ENCODE measurements at regions of chr16 and their contacts with region 1.

Region 1: DNA sequence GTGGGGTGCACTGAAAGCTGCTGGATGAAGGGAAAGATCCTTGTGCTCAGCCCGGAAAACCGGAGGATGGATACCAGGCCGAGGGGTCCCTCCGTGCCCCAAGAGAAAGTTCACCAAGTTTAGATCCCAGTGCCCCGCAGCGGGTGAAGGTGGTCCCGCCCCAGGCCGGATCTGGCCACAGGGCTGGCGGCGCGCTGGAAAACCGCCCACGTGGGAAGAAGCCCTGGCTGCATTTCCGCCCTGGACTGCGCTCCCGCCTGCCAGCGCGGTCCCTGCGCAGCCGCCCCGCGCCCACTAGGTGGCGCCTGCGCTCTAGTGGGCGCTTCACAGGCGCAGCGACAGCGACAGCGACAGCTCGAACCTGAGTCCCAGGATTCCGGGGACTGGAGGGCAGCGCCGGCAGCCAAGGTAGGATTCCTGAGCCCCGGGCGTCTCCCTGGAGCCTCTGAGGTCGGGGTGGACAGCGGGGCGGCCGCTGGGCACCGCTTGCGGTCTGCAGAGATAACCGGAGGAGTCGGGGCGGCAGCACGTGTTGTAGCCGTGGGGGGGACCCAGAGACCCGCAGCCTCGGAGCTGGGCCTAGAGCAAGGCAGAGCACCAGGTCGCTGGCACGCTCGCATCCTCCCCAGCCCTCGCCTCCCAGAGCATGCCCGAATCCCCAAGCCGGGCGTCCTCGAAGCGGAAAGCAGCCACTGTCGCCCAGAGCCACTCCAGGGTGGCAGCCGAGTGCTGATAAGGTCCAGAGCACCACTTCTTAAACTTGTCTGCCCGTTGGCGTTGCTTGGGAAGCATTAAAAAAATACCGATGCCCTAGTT is at the start of gene CHD9:
- DNase-seq: peak; percentile 88 to 90 (median 89)
- ATAC-seq: peak; percentile 84 to 95 (median 89)
- H3K4me3 ChIP-seq: peak within 1 kb of the TSS; percentile 67 to 81 (median 81)
- H3K27ac ChIP-seq: peak within 1 kb of the TSS; percentile 83 to 89 (median 83)
- H3K4me1 ChIP-seq: peaks cover 0 to 55% (median 16%) of the 10 kb centered on the region in 4 donors
- H3K27me3 ChIP-seq: no peaks in the 10 kb centered on the region
- CTCF ChIP-seq: peak; percentile 99 to 100 (median 100)
- POLR2A ChIP-seq: peak; percentile 71
- total RNA-seq, gene CHD9: 19.8 to 44.3 (median 30.2) TPM

Region 2: GRCh38 chr16:53129281-53130158 is 74.6 kb after region 1 on chr16:
- intact Hi-C with region 1: loop called in 1 of 2 experiments (anchors 5 kb)
- DNase-seq: no peak
- ATAC-seq: peak in 1 of 4 donors; percentile 8
- H3K4me3 ChIP-seq: peak overlapping the region; percentile 60 to 82 (median 61)
- H3K27ac ChIP-seq: peak overlapping the region; percentile 90 to 92 (median 91)
- H3K4me1 ChIP-seq: peaks cover 0 to 21% (median 9%) of the 10 kb centered on the region in 4 donors
- H3K27me3 ChIP-seq: no peaks in the 10 kb centered on the region
- CTCF ChIP-seq: no peak
- POLR2A ChIP-seq: no peak

Measured in right lobe of liver (tissue), 6 donors.